Right lobe of liver (tissue), 6 donors: ENCODE measurements at regions of chr2 and their contacts with region 1.

Region 1: GRCh38 chr2:197168705-197169104 is 141.9 kb downstream of the ANKRD44 start:
- DNase-seq: peak in 2 of 3 donors; percentile 45 to 61
- ATAC-seq: peak; percentile 62 to 72 (median 66)
- H3K4me3 ChIP-seq: no peak overlapping the region
- H3K27ac ChIP-seq: no peak overlapping the region
- H3K4me1 ChIP-seq: peaks cover 0 to 25% (median 0%) of the 10 kb centered on the region in 4 donors
- H3K27me3 ChIP-seq: no peaks in the 10 kb centered on the region
- CTCF ChIP-seq: peak in 3 of 4 donors; percentile 30 to 57 (median 45)
- POLR2A ChIP-seq: no peak

Region 2: DNA sequence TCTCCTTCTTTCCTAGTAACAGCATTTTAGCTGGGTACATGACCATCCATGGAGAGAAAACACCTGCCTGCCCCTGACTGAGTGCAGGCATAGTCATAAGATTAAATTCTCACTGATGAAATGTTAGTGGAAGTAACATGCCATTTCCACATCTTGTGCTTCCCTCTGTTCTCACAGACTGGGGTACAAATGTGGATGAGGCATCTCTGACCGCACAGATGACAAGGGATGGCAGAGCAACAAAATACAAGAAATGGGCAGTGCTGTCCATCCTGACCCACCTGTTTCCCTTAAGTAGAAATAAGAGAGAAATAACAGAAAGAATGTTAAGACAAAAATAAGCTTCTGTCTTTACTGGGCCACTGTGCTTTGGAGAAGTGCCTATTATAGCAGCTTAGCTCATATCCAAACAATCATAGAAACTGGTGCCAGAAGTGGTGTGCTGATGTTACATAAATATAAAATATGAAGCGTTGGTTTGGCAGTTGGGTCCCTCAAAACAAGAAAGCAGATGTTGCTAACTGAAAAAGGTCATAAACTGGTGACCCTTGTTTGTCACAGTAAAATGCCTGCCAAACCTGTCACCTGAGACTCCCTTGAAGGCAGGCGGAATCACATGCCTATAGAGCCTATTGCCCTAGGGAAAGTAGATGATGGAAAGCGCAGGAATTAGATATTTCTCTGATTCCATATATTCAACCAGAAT is 601.6 kb before region 1 on chr2:
- intact Hi-C with region 1: no loop called
- DNase-seq: no peak
- ATAC-seq: no peak
- H3K4me3 ChIP-seq: no peak overlapping the region
- H3K27ac ChIP-seq: no peak overlapping the region
- H3K4me1 ChIP-seq: no peaks in the 10 kb centered on the region
- H3K27me3 ChIP-seq: no peaks in the 10 kb centered on the region
- CTCF ChIP-seq: no peak
- POLR2A ChIP-seq: no peak

Region 3: DNA sequence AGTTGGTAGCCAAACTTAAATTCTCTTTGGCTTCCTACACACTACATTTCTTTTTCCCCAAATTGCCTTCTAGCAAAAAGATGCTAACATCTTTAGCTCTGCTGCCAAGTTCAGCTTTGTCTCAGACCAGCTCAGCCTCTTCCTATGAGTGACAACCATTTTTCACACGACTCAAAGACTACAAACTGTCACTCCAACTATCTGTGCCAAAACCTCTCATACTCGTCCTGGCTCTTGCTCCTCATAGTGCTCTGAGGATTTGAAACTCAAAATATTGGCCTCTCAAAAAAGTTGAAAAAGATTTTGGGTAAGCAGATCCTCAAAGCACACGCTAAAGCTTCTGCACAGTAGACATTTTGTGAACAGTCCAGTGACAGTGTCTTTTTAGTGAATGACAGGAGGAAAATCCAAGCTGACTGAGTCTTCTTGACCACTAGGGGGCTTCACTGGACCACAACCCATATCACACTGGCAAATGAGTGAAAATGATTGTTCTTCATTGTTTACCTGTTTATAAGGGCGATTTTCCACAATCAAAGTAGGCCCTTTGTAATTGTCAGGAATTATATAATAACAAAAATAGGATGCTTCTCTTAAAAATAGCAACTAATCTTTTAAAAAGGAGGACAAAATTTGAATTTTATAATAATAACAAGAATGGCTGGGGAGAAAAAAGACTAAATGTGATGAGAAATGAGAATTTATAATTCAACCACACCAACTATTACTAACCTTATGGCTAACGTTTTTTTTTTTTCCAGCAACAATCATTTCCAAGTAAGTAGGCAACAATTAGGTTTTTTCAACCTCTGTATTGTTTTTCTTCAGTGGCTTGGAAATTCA is 156.7 kb before region 1 on chr2:
- intact Hi-C with region 1: no loop called
- DNase-seq: no peak
- ATAC-seq: peak; percentile 94 to 95 (median 94)
- H3K4me3 ChIP-seq: no peak overlapping the region
- H3K27ac ChIP-seq: peak overlapping the region in 1 of 3 donors; percentile 20
- H3K4me1 ChIP-seq: peaks cover 0 to 1% (median 0%) of the 10 kb centered on the region in 4 donors
- H3K27me3 ChIP-seq: no peaks in the 10 kb centered on the region
- CTCF ChIP-seq: peak; percentile 72 to 85 (median 80)
- POLR2A ChIP-seq: no peak

Region 4: DNA sequence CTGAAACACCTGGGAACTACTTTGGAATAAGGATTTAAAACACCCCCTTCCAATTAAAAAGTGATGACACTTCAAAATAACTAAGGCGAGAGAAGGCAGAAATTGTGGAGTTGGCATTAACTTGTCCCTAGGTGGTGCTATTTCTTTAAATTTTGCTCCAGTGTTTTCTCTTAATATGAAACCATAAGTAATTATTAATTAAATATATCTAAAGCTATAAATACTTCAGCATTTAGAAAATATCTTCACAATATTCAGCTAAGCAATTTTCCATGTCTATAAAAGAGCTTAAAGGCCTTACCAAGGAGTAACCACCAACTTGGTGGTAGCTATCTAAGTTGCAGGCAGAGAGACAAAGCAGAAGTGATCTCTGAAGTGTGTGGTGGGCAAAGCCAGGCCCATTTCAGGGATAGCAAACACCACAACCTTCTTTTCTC is 55.4 kb before region 1 on chr2:
- intact Hi-C with region 1: loop called in 1 of 2 experiments (anchors 10 kb)
- DNase-seq: no peak
- ATAC-seq: peak; percentile 28 to 54 (median 44)
- H3K4me3 ChIP-seq: no peak overlapping the region
- H3K27ac ChIP-seq: no peak overlapping the region
- H3K4me1 ChIP-seq: peaks cover 0 to 12% (median 6%) of the 10 kb centered on the region in 4 donors
- H3K27me3 ChIP-seq: no peaks in the 10 kb centered on the region
- CTCF ChIP-seq: peak; percentile 58 to 70 (median 68)
- POLR2A ChIP-seq: no peak